ENCODE measurements at regions of chr2 and their contacts with region 1.

Region 1: DNA sequence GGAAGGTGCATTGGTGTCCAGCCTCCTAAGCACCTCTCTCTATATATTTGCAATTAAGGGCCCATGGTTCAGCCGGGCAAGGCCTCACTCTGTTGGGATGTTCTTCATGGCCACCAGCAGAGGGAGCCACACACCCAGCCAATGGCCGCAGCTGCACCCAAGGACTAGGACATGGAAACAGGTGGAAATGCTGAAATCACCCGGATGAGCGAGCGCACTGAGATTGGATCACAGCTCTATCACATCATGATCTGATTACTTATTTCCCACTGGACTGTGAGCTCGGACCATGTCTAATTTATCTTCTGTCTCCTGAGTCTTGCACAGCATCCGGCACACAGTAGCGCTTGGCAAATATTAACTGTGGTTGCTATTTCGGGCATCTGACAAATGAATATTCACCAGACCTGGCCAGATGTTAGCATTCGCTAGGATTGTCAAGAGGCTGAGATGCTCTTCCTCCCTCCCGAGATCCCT is 31.2 kb downstream of the KIF3C start:
- DNase-seq: peak; percentile 83
- ATAC-seq: peak; percentile 99
- H3K4me3 ChIP-seq: no peak overlapping the region
- H3K27ac ChIP-seq: no peak overlapping the region
- H3K4me1 ChIP-seq: peaks cover 2% of the 10 kb centered on the region; the same call in 1 of the 2 replicates
- H3K27me3 ChIP-seq: no peaks in the 10 kb centered on the region
- CTCF ChIP-seq: peak; percentile 96
- POLR2A ChIP-seq: 0 out of 2 replicates have a peak, but pooled peaks have one; percentile 21
- RAD21 ChIP-seq: peak; percentile 100

Region 2: DNA sequence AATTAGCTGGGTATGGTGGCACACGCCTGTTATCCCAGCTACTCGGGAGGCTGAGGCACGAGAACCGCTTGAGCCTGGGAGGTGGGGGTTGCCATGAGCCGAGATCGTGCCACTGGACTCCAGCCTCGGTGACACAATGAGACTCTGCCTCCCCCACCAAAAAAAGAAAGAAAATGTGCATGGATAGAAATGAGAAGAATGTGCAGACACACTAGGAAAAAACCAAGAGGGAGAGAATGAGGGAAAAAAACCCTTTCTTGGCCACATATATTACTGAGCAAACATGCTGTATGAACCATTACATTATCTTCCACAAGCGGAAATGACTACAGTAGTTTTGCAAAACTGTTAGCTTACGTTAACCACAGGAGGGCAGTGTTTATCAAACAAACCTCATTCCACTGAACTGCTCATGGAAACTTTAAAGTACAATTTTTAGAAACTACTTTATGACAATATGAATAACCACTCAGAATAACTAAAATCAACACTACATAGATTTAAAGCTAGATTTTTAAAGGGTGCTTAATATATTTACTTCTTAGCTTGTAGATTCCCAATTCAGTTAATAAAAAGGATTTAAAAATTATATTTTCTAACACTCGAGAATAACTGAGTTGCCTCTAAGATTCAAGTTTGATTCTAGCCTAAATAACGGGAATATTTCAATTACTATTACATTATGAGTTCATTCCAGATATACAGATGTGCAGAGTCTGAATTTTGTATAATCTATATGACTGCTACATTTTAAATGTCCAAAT is 99.2 kb before region 1 on chr2:
- CTCF ChIA-PET with region 1: interaction called, 3 read pairs
- POLR2A ChIA-PET with region 1: no interaction called
- dilution Hi-C with region 1: no loop called
- in situ Hi-C with region 1: no loop called
- intact Hi-C with region 1: loop called (anchors 1 kb)
- DNase-seq: peak; percentile 93
- ATAC-seq: peak; percentile 92
- H3K4me3 ChIP-seq: no peak overlapping the region
- H3K27ac ChIP-seq: peak overlapping the region; percentile 66
- H3K4me1 ChIP-seq: peaks cover 5% of the 10 kb centered on the region
- H3K27me3 ChIP-seq: no peaks in the 10 kb centered on the region
- CTCF ChIP-seq: peak; percentile 74
- POLR2A ChIP-seq: no peak
- RAD21 ChIP-seq: peak; percentile 71

Region 3: GRCh38 chr2:25991965-25992364 is 40.9 kb after region 1 on chr2:
- CTCF ChIA-PET with region 1: interaction called, 3 read pairs
- POLR2A ChIA-PET with region 1: no interaction called
- dilution Hi-C with region 1: no loop called
- in situ Hi-C with region 1: no loop called
- intact Hi-C with region 1: loop called (anchors 1 kb)
- DNase-seq: no peak
- ATAC-seq: no peak
- H3K4me3 ChIP-seq: no peak overlapping the region
- H3K27ac ChIP-seq: no peak overlapping the region
- H3K4me1 ChIP-seq: no peaks in the 10 kb centered on the region
- H3K27me3 ChIP-seq: peaks cover 2% of the 10 kb centered on the region; the same call in 1 of the 2 replicates
- CTCF ChIP-seq: no peak
- POLR2A ChIP-seq: no peak
- RAD21 ChIP-seq: no peak

Region 4: DNA sequence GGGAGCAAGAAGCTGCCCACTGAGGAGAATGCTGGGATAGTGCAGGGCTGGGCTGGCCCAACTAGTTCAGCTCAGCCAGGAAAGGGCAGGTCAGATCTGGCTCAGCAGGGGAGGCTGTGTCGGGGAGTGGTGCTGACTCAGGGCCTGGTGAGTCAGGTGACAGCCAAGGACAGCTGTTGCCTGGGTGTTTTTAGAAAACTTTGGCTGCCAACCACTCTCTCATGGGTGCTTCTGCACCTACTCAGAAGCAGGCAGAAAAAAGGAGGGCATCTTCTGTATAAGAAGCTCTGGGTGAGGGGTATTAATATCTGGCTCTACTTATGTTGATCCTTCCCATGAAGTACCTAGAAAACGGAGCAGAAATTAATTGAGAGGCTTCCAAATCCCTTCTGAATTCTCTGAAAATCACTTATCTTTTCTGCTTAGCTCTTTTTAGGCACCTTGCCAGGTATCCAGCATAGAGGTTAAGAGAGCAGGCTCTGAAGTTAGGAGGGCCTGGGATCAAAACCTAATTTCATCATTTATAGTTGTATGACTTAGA is 67.1 kb after region 1 on chr2:
- CTCF ChIA-PET with region 1: no interaction called
- POLR2A ChIA-PET with region 1: no interaction called
- dilution Hi-C with region 1: no loop called
- in situ Hi-C with region 1: no loop called
- intact Hi-C with region 1: no loop called
- DNase-seq: peak; percentile 88
- ATAC-seq: peak; percentile 100
- H3K4me3 ChIP-seq: no peak overlapping the region
- H3K27ac ChIP-seq: 0 out of 2 replicates have a peak overlapping the region, but pooled peaks have one; percentile 11
- H3K4me1 ChIP-seq: peaks cover 5% of the 10 kb centered on the region
- H3K27me3 ChIP-seq: peaks cover 2% of the 10 kb centered on the region; the same call in 1 of the 2 replicates
- CTCF ChIP-seq: no peak
- POLR2A ChIP-seq: no peak
- RAD21 ChIP-seq: 0 out of 2 replicates have a peak, but pooled peaks have one; percentile 4

Region 5: GRCh38 chr2:26184555-26185303 is 233.6 kb after region 1 on chr2:
- CTCF ChIA-PET with region 1: no interaction called
- POLR2A ChIA-PET with region 1: no interaction called
- dilution Hi-C with region 1: no loop called
- in situ Hi-C with region 1: no loop called
- intact Hi-C with region 1: loop called (anchors 1 kb)
- DNase-seq: peak; percentile 78
- ATAC-seq: peak; percentile 98
- H3K4me3 ChIP-seq: peak overlapping the region; percentile 40
- H3K27ac ChIP-seq: no peak overlapping the region; the same call in 1 of the 2 replicates
- H3K4me1 ChIP-seq: no peaks in the 10 kb centered on the region
- H3K27me3 ChIP-seq: no peaks in the 10 kb centered on the region; the same call in 1 of the 2 replicates
- CTCF ChIP-seq: peak; percentile 74
- POLR2A ChIP-seq: no peak
- RAD21 ChIP-seq: peak; percentile 49

Region 6: DNA sequence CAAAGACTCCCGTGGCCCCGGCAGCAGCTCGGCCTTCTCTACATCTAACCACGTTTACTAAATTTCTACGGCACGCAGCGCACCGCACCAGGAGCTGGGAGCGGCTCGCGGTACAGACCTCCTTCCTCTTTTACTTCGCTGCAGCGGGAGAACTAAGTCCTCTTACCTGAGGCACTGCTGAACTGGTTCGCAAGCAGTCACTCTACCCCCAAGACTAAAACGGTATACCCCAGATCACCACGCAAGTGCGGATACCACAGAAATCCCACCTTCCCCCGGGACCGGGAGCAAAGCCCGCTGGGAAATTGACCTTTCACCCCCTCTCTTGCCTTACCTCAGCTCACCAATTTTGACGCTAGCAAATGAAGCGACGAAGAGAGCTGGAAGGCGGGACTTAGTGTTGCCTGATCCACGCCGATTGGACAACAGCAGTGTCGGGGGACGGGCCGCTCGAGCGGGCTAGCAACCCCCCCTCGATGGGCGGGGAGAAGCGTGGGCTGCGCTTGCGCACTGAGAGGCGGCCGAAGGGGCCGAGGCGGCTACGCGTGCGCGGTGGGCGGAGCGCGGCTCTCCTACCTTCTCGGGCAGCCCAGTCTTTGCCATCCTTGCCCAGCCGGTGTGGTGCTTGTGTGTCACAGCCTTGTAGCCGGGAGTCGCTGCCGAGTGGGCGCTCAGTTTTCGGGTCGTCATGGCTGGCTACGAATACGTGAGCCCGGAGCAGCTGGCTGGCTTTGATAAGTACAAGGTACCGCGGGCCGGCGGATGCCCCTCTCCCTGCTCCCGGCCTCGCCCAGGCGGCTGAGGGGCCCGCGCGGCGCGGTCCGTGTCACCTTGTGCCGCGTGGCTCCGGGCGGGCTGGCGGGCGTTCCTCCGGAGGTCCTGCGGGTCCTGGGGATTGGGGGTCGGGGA is 394.7 kb after region 1 on chr2 and contains the start of gene SELENOI:
- CTCF ChIA-PET with region 1: no interaction called
- POLR2A ChIA-PET with region 1: no interaction called
- dilution Hi-C with region 1: no loop called
- in situ Hi-C with region 1: loop called (anchors 25 kb)
- intact Hi-C with region 1: no loop called
- DNase-seq: peak; percentile 99
- ATAC-seq: peak; percentile 99
- H3K4me3 ChIP-seq: peak within 1 kb of the TSS; percentile 77
- H3K27ac ChIP-seq: peak within 1 kb of the TSS; percentile 87
- H3K4me1 ChIP-seq: no peaks in the 10 kb centered on the region
- H3K27me3 ChIP-seq: no peaks in the 10 kb centered on the region
- CTCF ChIP-seq: no peak
- POLR2A ChIP-seq: peak; percentile 84
- RAD21 ChIP-seq: no peak
- total RNA-seq, gene SELENOI: 25.0 and 25.1 TPM in 2 replicates